Activated CD4-positive, alpha-beta T cell treated with anti-CD3 and anti-CD28 coated beads for 36 hours (primary cell): ENCODE measurements at regions of chr6 and their contacts with region 1.

Region 1: GRCh38 chr6:149075616-149076364 is 241.7 kb upstream of the TAB2 start:
- DNase-seq: peak; percentile 41
- ATAC-seq: peak; percentile 77
- H3K4me3 Mint-ChIP-seq: peak overlapping the region; percentile 21
- H3K27ac Mint-ChIP-seq: peak overlapping the region; percentile 52
- H3K4me1 Mint-ChIP-seq: peaks cover 36% of the 10 kb centered on the region
- H3K27me3 Mint-ChIP-seq: no peaks in the 10 kb centered on the region

Region 2: GRCh38 chr6:149060300-149060997 is 15.3 kb before region 1 on chr6:
- CTCF ChIA-PET with region 1: interaction called, 51 read pairs
- POLR2A ChIA-PET with region 1: interaction called, 3 read pairs
- intact Hi-C with region 1: no loop called
- DNase-seq: peak; percentile 76
- ATAC-seq: peak; percentile 87
- H3K4me3 Mint-ChIP-seq: peak overlapping the region; percentile 62
- H3K27ac Mint-ChIP-seq: peak overlapping the region; percentile 79
- H3K4me1 Mint-ChIP-seq: peaks cover 44% of the 10 kb centered on the region
- H3K27me3 Mint-ChIP-seq: no peaks in the 10 kb centered on the region